Activated B cell treated with CpG ODN at 0.5 μM for 24 hours (primary cell): ENCODE measurements at regions of chr7 and their contacts with region 1.

Region 1: DNA sequence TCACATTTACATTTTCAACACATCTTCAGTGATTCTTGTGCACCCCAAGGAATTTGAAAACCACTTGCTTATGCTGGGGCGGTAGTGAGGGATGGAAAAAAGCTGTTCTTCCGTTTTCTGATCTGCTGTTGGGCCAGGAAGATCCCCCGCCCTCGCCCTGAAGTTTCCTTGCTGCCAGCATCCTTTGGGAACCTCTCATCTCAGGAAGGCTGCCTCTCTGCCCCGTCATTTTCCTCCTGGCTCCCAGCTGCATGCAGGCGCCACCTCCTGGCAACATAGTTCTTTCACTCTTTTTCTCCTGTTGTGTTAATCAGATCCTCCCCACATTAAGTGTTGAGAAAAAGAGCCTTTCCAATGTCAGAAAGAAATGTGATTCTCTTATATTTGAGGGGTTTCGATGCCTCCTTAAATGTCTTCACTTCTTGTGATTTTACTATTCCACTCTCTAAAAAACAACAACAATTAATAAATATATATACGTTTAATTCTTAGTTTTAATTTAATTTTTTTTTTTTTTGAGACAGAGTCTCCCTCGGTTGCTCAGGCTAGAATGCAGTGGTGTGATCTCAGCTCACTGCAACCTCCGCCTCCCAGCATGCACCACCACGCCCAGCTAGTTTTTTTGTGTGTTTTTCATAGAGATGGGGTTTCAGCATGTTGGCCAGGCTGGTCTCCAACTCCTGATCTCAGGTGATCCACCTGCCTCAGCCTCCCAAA is 122.9 kb downstream of the RALA start:
- DNase-seq: no peak
- ATAC-seq: peak; percentile 61
- H3K4me3 Mint-ChIP-seq: no peak overlapping the region
- H3K27ac Mint-ChIP-seq: no peak overlapping the region
- H3K4me1 Mint-ChIP-seq: peaks cover 19% of the 10 kb centered on the region
- H3K27me3 Mint-ChIP-seq: no peaks in the 10 kb centered on the region
- CTCF ChIP-seq: no peak

Region 2: GRCh38 chr7:39580149-39580874 is 165.9 kb before region 1 on chr7:
- CTCF ChIA-PET with region 1: interaction called, 327 read pairs
- POLR2A ChIA-PET with region 1: interaction called, 3 read pairs
- intact Hi-C with region 1: loop called (anchors 1 kb)
- DNase-seq: peak; percentile 39
- ATAC-seq: peak; percentile 97
- H3K4me3 Mint-ChIP-seq: no peak overlapping the region
- H3K27ac Mint-ChIP-seq: no peak overlapping the region
- H3K4me1 Mint-ChIP-seq: peaks cover 3% of the 10 kb centered on the region
- H3K27me3 Mint-ChIP-seq: no peaks in the 10 kb centered on the region
- CTCF ChIP-seq: no peak

Region 3: DNA sequence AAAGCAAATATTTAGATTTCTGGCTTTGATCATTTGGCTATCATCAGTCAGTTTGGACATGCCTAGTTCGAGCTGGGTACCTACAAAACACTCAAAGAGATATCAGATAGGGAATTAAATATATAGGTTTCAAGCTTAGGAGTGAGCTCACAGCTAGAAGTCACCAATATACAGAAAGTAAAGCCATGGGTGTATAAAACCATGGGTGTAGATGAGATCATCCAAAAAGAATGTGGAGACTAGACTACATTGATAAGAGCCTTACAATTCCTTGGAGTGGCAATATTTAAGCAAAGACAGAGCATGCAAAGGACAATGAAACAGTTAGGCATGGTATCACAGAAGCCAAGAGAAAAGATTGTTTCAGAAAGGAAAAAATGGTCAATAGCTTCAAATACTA is 130.1 kb before region 1 on chr7:
- CTCF ChIA-PET with region 1: no interaction called
- POLR2A ChIA-PET with region 1: no interaction called
- intact Hi-C with region 1: no loop called
- DNase-seq: no peak
- ATAC-seq: no peak
- H3K4me3 Mint-ChIP-seq: no peak overlapping the region
- H3K27ac Mint-ChIP-seq: no peak overlapping the region
- H3K4me1 Mint-ChIP-seq: peaks cover 8% of the 10 kb centered on the region
- H3K27me3 Mint-ChIP-seq: peaks cover 11% of the 10 kb centered on the region
- CTCF ChIP-seq: no peak

Region 4: GRCh38 chr7:39703144-39703543 is 43.1 kb before region 1 on chr7:
- CTCF ChIA-PET with region 1: interaction called, 3 read pairs
- POLR2A ChIA-PET with region 1: no interaction called
- intact Hi-C with region 1: loop called (anchors 5 kb)
- DNase-seq: no peak
- ATAC-seq: no peak
- H3K4me3 Mint-ChIP-seq: no peak overlapping the region
- H3K27ac Mint-ChIP-seq: no peak overlapping the region
- H3K4me1 Mint-ChIP-seq: no peaks in the 10 kb centered on the region
- H3K27me3 Mint-ChIP-seq: no peaks in the 10 kb centered on the region
- CTCF ChIP-seq: no peak

Region 5: DNA sequence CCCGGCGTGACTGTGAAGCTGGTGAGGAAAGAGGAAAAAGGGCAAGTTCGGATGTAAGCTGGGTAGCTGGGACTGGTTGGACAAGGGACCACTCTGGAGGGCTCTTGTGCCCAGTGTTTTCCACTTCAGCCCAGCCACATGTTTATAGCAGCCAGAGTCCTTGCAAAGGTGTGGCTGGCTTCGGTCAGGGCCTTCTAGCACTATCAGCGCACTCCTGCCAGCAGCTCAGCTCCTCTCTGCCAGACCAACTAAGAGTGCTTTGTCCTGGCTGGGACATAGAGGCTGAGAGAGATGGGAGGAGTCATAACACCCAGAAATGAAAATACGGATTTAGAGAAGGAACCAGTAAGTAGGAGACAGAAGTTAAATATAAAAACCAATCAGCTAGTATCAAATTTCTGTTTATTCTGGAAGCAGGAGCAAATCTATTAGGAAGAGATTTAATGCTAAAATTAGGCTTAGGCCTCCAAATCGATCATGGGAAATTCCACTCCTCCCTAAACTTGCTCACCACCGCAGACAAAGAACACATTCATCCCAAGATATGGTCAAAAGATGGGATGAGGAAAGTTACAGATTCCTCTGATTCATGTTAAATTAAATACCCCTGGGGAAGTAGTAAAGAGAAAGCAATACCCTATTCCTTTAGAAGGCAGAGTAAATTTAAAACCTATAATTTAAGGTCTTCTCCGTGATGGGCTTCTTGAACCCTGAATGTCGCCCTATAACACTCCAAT is 12.1 kb after region 1 on chr7:
- CTCF ChIA-PET with region 1: interaction called, 14 read pairs
- POLR2A ChIA-PET with region 1: no interaction called
- intact Hi-C with region 1: no loop called
- DNase-seq: no peak
- ATAC-seq: no peak
- H3K4me3 Mint-ChIP-seq: no peak overlapping the region
- H3K27ac Mint-ChIP-seq: no peak overlapping the region
- H3K4me1 Mint-ChIP-seq: no peaks in the 10 kb centered on the region
- H3K27me3 Mint-ChIP-seq: no peaks in the 10 kb centered on the region
- CTCF ChIP-seq: no peak

Region 6: GRCh38 chr7:40199076-40199802 is 453.0 kb after region 1 on chr7:
- CTCF ChIA-PET with region 1: no interaction called
- POLR2A ChIA-PET with region 1: no interaction called
- intact Hi-C with region 1: no loop called
- DNase-seq: no peak
- ATAC-seq: no peak
- H3K4me3 Mint-ChIP-seq: no peak overlapping the region
- H3K27ac Mint-ChIP-seq: no peak overlapping the region
- H3K4me1 Mint-ChIP-seq: no peaks in the 10 kb centered on the region
- H3K27me3 Mint-ChIP-seq: peaks cover 6% of the 10 kb centered on the region
- CTCF ChIP-seq: no peak